Activated naive CD4-positive, alpha-beta T cell treated with anti-CD3 and anti-CD28 coated beads for 36 hours (primary cell): ENCODE measurements at regions of chr1 and their contacts with region 1.

Region 1: GRCh38 chr1:235971571-235972310 is 93.1 kb downstream of the NID1 start:
- DNase-seq: peak; percentile 94
- H3K4me3 Mint-ChIP-seq: peak overlapping the region; percentile 67
- H3K27ac Mint-ChIP-seq: peak overlapping the region; percentile 76
- H3K4me1 Mint-ChIP-seq: peaks cover 14% of the 10 kb centered on the region
- H3K27me3 Mint-ChIP-seq: no peaks in the 10 kb centered on the region

Region 2: GRCh38 chr1:235513495-235514366 is 458.0 kb before region 1 on chr1:
- CTCF ChIA-PET with region 1: interaction called, 8 read pairs
- intact Hi-C with region 1: loop called (anchors 1 kb)
- DNase-seq: peak; percentile 54
- H3K4me3 Mint-ChIP-seq: no peak overlapping the region
- H3K27ac Mint-ChIP-seq: no peak overlapping the region
- H3K4me1 Mint-ChIP-seq: no peaks in the 10 kb centered on the region
- H3K27me3 Mint-ChIP-seq: no peaks in the 10 kb centered on the region

Region 3: GRCh38 chr1:235783148-235783776 is 188.5 kb before region 1 on chr1:
- CTCF ChIA-PET with region 1: interaction called, 27 read pairs
- intact Hi-C with region 1: loop called (anchors 2 kb)
- DNase-seq: no peak
- H3K4me3 Mint-ChIP-seq: no peak overlapping the region
- H3K27ac Mint-ChIP-seq: no peak overlapping the region
- H3K4me1 Mint-ChIP-seq: no peaks in the 10 kb centered on the region
- H3K27me3 Mint-ChIP-seq: no peaks in the 10 kb centered on the region

Region 4: GRCh38 chr1:235878082-235878811 is 93.5 kb before region 1 on chr1:
- CTCF ChIA-PET with region 1: interaction called, 14 read pairs
- intact Hi-C with region 1: no loop called
- DNase-seq: no peak
- H3K4me3 Mint-ChIP-seq: no peak overlapping the region
- H3K27ac Mint-ChIP-seq: no peak overlapping the region
- H3K4me1 Mint-ChIP-seq: peaks cover 56% of the 10 kb centered on the region
- H3K27me3 Mint-ChIP-seq: no peaks in the 10 kb centered on the region

Region 5: DNA sequence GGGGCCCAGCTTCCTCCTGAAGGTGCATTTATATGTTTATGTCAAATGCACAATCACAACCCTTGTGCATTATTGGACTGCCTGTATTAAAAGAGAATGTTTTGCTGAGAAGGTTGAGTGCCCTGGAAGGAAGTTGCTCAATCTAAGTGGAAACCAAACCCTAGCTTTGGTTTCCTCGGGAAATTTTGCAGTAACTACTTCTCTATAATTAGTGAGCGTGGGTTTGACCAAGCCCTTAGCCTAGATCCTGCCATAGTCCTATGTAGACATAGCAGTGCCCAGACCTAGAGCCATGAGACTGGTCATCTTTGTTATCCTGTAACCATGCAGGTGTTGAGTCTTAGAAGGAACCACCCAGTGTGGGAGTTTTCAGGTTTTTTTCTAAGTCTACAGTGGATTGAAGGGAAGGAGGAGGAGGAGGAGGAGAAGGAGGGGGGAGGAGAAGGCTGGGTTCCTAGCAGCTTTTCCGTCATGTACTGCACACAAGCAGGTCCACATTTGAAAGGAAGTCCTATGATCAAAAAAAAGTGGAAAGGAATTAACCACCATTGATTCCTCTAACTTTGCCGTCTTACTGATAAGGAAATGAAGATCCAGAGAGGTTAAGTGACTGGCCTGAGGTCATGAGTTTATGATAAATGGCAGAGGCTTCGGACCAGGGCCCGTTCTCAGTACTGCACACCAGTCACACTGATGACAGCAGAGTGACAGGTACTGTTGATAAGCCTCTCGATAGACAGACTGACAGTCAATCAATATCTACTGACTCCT is 32.8 kb before region 1 on chr1:
- CTCF ChIA-PET with region 1: interaction called, 11 read pairs
- intact Hi-C with region 1: no loop called
- DNase-seq: no peak
- H3K4me3 Mint-ChIP-seq: no peak overlapping the region
- H3K27ac Mint-ChIP-seq: no peak overlapping the region
- H3K4me1 Mint-ChIP-seq: peaks cover 25% of the 10 kb centered on the region
- H3K27me3 Mint-ChIP-seq: no peaks in the 10 kb centered on the region

Region 6: DNA sequence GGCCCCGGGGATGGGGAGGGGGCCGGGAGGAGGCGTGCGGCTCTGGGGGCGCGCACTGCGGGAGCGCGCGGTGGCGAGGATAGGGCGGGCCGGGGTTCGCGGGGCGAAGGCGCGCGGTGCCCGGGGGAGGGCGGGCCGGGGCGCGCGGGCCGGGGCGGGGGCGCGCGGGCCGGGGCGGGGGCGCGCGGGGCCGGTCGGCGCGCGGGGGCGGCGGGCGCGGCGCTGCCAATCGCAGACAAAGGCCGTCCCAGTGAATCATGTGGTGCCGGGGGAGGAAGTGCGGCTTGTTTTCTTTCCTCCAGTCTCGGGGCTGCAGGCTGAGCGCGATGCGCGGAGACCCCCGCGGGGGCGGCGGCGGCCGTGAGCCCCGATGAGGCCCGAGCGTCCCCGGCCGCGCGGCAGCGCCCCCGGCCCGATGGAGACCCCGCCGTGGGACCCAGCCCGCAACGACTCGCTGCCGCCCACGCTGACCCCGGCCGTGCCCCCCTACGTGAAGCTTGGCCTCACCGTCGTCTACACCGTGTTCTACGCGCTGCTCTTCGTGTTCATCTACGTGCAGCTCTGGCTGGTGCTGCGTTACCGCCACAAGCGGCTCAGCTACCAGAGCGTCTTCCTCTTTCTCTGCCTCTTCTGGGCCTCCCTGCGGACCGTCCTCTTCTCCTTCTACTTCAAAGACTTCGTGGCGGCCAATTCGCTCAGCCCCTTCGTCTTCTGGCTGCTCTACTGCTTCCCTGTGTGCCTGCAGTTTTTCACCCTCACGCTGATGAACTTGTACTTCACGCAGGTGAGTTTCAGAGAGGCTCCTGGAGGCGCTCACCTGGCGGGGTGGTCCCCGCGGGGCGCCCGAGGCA is 170.7 kb after region 1 on chr1 and contains the start of gene GPR137B:
- CTCF ChIA-PET with region 1: no interaction called
- intact Hi-C with region 1: no loop called
- DNase-seq: peak; percentile 74
- H3K4me3 Mint-ChIP-seq: peak within 1 kb of the TSS; percentile 87
- H3K27ac Mint-ChIP-seq: no peak within 1 kb of the TSS
- H3K4me1 Mint-ChIP-seq: peaks cover 9% of the 10 kb centered on the region
- H3K27me3 Mint-ChIP-seq: peaks cover 37% of the 10 kb centered on the region
- total RNA-seq, gene GPR137B: 1.6 to 2.4 TPM